ENCODE measurements at regions of chr19 and their contacts with region 1.

Region 1: GRCh38 chr19:15672580-15673175 is at the start of gene CYP4F12:
- DNase-seq: peak; percentile 83 to 94 (median 89)
- ATAC-seq: peak; percentile 95 to 99 (median 98)
- H3K4me3 ChIP-seq: peak within 1 kb of the TSS in 10 of 12 donors; percentile 7 to 49 (median 36)
- H3K27ac ChIP-seq: peak within 1 kb of the TSS in 11 of 12 donors; percentile 9 to 78 (median 60)
- H3K4me1 ChIP-seq: peaks cover 0 to 20% (median 10%) of the 10 kb centered on the region in 12 donors
- H3K27me3 ChIP-seq: peaks cover 0 to 5% (median 0%) of the 10 kb centered on the region in 9 donors
- CTCF ChIP-seq: no peak
- POLR2A ChIP-seq: peak in 1 of 2 donors; percentile 55
- total RNA-seq, gene CYP4F12: 1.8 to 5.2 (median 3.1) TPM

Region 2: DNA sequence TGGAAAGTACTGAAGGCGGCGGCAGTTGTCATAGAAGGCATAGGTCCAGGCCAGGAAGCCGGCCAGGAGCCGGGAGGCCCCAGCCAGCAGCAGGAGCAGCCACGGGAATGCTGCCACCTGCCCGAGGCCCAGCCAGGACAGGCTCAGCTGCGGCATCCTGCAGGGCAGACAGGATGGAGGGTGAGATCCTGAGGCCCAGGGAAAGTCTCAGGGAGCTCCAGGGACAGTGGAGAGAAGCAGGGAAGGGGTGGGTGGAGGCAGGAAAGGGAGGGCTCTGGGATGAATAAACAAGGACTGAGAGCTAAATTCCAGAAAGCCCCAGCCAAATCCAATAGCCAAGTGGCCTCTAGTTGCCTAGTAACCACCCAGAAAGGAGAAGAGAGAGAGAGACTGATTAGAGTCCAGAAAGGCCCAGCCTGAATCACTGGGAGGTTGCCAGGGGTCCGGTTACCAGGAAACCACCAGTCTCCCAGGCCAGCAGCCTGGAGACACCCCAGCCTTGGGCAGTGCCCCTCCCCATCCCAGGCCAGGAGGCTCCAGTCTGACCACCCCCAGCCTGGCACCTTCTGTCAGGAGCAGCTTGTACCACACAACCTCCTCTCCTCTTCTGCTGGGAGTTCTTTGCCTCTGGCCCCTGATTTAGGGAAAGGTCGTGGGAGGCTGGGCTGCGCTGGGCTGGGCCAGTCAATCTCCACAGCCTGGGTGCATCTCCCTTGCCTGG is 107.2 kb after region 1 on chr19:
- intact Hi-C with region 1: loop called in 3 of 10 experiments (anchors 2 to 10 kb)
- DNase-seq: peak; percentile 79 to 89 (median 82)
- ATAC-seq: peak; percentile 84 to 96 (median 91)
- H3K4me3 ChIP-seq: peak overlapping the region in 9 of 12 donors; percentile 18 to 50 (median 32)
- H3K27ac ChIP-seq: peak overlapping the region; percentile 4 to 86 (median 63)
- H3K4me1 ChIP-seq: peaks cover 0 to 28% (median 15%) of the 10 kb centered on the region in 12 donors
- H3K27me3 ChIP-seq: peaks cover 0 to 6% (median 0%) of the 10 kb centered on the region in 9 donors
- CTCF ChIP-seq: no peak
- POLR2A ChIP-seq: no peak